HEK293T (cell line): ENCODE measurements at regions of chr7 and their contacts with region 1.

Region 1: GRCh38 chr7:140176811-140177702 is at the start of gene KDM7A:
- DNase-seq: peak; percentile 95

Region 2: GRCh38 chr7:139875821-139876241 is 301.2 kb before region 1 on chr7:
- CTCF ChIA-PET with region 1: no interaction called
- POLR2A ChIA-PET with region 1: no interaction called
- DNase-seq: no peak

Region 3: GRCh38 chr7:140136073-140136472 is 41.0 kb before region 1 on chr7:
- CTCF ChIA-PET with region 1: no interaction called
- POLR2A ChIA-PET with region 1: no interaction called
- DNase-seq: no peak

Region 4: GRCh38 chr7:140165422-140165821 is 11.6 kb before region 1 on chr7:
- CTCF ChIA-PET with region 1: interaction called, 3 read pairs
- POLR2A ChIA-PET with region 1: interaction called, 11 read pairs
- DNase-seq: no peak

Region 5: DNA sequence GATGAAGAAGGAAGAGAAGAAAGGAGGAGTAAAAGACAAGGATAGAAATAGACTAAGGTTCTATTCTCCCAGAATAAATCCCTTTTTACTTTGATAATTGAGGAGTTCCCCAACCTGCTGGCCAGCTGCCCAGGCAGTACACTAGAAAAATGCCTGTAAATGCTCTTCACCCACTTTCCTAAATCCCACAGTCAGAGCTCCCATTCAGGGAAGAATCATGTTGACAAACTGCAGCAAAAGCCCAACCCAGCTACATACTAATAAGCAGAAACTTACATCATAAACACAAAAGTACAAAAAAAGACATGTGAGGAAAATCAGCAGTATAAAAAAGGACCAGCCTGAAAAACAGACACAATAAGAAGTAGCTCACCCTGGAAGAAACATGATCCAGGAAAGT is 15.6 kb after region 1 on chr7:
- CTCF ChIA-PET with region 1: interaction called, 3 read pairs
- POLR2A ChIA-PET with region 1: interaction called, 11 read pairs
- DNase-seq: no peak